ENCODE measurements at regions of chr2 and their contacts with region 1.

Region 1: DNA sequence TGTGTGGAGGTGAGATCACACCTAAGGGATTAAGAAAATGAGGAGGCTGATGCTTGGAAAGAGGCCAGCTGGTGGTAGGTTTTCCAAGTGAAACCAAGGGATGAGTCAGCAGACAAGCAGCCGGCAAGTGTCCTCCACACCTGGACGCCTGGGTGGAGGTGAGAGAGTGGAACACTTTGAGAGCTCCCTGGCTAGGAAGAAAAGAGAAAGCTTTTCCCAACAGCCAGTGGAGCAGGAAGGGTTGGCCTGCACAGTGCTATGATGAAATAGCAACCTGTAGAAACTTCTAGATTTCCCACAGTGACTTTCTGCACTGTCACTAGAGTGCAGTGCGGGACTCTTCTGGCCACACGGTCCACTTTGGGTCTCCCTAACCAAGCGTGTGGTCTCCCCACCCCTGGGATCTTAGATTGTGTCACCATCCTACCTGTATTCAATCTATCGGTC is 19.6 kb upstream of the IL37 start:
- DNase-seq: no peak
- CTCF ChIP-seq: no peak

Region 2: GRCh38 chr2:112906276-112906675 is 14.9 kb after region 1 on chr2:
- CTCF ChIA-PET with region 1: interaction called, 13 read pairs
- POLR2A ChIA-PET with region 1: no interaction called
- DNase-seq: no peak
- CTCF ChIP-seq: no peak

Measured in GM10248 (cell line).